Breast epithelium (tissue), 4 donors: ENCODE measurements at regions of chr4 and their contacts with region 1.

Region 1: GRCh38 chr4:127518022-127518421 is 114.7 kb upstream of the INTU start:
- DNase-seq: no peak
- H3K4me3 ChIP-seq: no peak overlapping the region
- H3K27ac ChIP-seq: no peak overlapping the region
- H3K4me1 ChIP-seq: no peaks in the 10 kb centered on the region
- H3K27me3 ChIP-seq: no peaks in the 10 kb centered on the region
- CTCF ChIP-seq: no peak
- POLR2A ChIP-seq: no peak

Region 2: GRCh38 chr4:125928652-125929051 is 1589.4 kb before region 1 on chr4:
- intact Hi-C with region 1: loop called (anchors 5 kb)
- DNase-seq: no peak
- H3K4me3 ChIP-seq: no peak overlapping the region
- H3K27ac ChIP-seq: no peak overlapping the region
- H3K4me1 ChIP-seq: no peaks in the 10 kb centered on the region
- H3K27me3 ChIP-seq: no peaks in the 10 kb centered on the region
- CTCF ChIP-seq: no peak
- POLR2A ChIP-seq: no peak